ENCODE measurements at regions of chr1 and their contacts with region 1.

Region 1: DNA sequence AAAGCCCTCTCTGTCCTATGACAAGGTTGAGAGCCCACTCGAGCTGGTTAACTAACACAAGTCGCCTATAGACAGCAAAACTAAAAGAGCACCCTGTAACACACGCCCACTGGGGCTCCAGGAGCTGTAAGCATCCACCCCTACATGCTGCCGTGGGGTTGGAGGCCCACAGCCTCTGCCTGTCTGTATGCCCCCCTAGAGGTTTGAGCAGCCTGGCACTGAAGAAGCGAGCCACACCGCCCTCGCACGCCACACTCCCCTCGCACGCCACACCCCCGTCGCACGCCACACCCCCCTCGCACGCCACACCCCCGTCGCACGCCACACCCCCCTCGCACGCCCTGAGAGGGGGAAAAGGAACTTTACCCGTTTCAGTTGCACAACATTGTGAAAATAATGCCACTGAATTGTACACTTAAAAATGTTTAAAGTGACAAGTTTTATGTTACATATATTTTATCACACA is 13.2 kb upstream of the HMGCL start:
- DNase-seq: peak in 1 of 2 experiments; percentile 55
- H3K4me3 ChIP-seq: peak overlapping the region; percentile 54
- H3K27ac ChIP-seq: no peak overlapping the region
- H3K4me1 ChIP-seq: no peaks in the 10 kb centered on the region
- H3K27me3 ChIP-seq: no peaks in the 10 kb centered on the region
- CTCF ChIP-seq: no peak

Region 2: DNA sequence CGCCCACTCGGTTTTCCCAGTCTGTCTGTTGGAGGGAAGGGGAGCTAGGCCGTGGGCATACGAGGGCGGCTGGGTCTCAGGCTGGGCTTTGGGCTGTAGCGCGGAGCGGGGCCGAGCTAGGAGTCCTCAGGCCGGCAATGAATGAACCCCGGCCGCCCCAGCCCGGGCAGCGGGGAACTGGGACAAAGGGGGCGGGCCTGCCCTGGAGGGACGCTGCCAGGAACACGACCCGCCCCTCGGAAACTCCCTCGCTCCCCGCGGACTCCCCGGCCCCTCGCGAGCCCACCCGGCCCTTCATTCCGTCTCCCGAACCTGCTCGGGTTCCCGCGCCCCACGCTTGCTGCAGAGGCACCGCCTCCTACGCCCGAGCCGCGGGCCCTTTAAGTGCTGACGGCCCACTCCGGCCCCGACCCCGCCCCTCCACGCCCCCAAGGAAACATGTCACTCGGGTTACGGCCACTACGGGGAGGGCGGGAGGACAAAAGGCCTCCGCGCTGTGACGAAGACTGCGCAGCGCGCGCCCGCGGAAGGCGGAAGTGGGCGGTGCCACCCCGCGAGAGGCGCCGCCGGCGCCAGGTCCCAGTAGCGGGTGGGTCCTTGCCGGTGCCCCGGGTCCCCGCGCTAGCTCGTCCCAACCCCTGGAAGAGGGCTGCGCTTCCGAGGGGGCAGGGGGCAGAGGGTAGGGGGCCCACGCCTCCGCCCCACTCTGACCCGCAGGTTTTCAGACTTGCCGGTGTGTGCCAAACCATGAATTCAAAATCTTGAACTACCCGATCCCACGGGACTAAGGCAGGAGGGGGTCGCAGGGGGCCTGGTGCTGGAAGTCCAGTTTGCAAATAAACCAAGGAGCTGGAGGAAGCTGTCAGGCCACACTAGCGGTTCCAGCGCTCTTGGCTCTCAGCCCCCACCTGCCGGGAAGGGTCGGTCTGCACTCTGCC is 37.8 kb before region 1 on chr1 and contains the start of gene GALE:
- CTCF ChIA-PET with region 1: interaction called, 3 read pairs
- POLR2A ChIA-PET with region 1: interaction called, 21 read pairs
- intact Hi-C with region 1: no loop called
- DNase-seq: peak; percentile 76 to 93
- H3K4me3 ChIP-seq: peak within 1 kb of the TSS; percentile 72
- H3K27ac ChIP-seq: peak within 1 kb of the TSS; percentile 85
- H3K4me1 ChIP-seq: peaks cover 14% of the 10 kb centered on the region
- H3K27me3 ChIP-seq: no peaks in the 10 kb centered on the region
- CTCF ChIP-seq: no peak
- total RNA-seq, gene GALE: 40.5 and 45.8 TPM in 2 replicates